ENCODE measurements at regions of chr1 and their contacts with region 1.

Region 1: DNA sequence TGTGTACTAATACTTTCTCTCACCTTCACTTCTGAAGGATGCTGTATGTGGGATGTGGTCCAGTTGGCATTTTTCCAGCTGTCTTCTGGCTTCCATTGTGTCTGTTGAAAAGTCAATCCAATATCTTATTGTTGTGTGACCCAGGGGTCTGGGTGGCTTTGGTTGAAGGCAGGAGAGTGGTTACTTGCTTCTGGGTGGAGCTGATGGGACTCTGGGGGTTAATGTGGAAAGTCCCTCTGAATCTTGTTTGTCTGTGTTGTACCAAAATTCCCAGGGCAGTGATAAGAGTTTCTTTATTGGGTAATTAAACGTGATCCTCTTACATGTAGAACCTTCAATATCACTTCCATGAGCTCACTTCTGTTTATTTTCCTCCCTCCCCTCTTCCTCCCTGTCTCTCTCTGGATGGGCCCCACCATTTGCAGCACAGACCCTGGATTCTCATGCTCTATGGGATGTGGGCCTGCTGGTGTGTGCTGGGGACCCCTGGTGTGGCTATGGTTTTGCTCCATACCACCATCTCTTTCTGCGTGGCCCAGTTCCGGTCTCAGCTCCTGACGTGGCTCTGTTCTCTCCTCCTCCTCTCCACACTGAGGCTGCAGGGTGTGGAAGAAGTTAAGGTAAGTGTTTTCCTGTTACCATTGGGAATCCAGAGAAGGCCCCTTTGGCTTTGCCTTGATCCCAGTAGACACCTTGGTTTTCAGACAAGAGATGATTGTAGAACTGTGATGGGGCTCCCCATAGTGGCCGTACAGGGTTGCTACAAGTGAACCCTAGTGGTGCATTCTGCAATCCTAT is 71.5 kb downstream of the HHAT start:
- DNase-seq: peak; percentile 77
- H3K4me3 Mint-ChIP-seq: no peak overlapping the region
- H3K27ac Mint-ChIP-seq: no peak overlapping the region
- H3K4me1 Mint-ChIP-seq: peaks cover 8% of the 10 kb centered on the region
- H3K27me3 Mint-ChIP-seq: no peaks in the 10 kb centered on the region
- CTCF ChIP-seq: peak; percentile 82

Region 2: GRCh38 chr1:210143465-210144062 is 256.7 kb before region 1 on chr1:
- CTCF ChIA-PET with region 1: no interaction called
- intact Hi-C with region 1: loop called (anchors 1 kb)
- DNase-seq: peak; percentile 84
- H3K4me3 Mint-ChIP-seq: no peak overlapping the region
- H3K27ac Mint-ChIP-seq: no peak overlapping the region
- H3K4me1 Mint-ChIP-seq: no peaks in the 10 kb centered on the region
- H3K27me3 Mint-ChIP-seq: no peaks in the 10 kb centered on the region
- CTCF ChIP-seq: no peak

Region 3: GRCh38 chr1:210373885-210374599 is 26.2 kb before region 1 on chr1:
- CTCF ChIA-PET with region 1: interaction called, 17 read pairs
- intact Hi-C with region 1: loop called (anchors 1 kb)
- DNase-seq: peak; percentile 93
- H3K4me3 Mint-ChIP-seq: peak overlapping the region; percentile 65
- H3K27ac Mint-ChIP-seq: peak overlapping the region; percentile 96
- H3K4me1 Mint-ChIP-seq: peaks cover 21% of the 10 kb centered on the region
- H3K27me3 Mint-ChIP-seq: no peaks in the 10 kb centered on the region
- CTCF ChIP-seq: peak; percentile 83

Region 4: GRCh38 chr1:210415846-210416448 is 15.7 kb after region 1 on chr1:
- CTCF ChIA-PET with region 1: no interaction called
- intact Hi-C with region 1: no loop called
- DNase-seq: no peak
- H3K4me3 Mint-ChIP-seq: no peak overlapping the region
- H3K27ac Mint-ChIP-seq: no peak overlapping the region
- H3K4me1 Mint-ChIP-seq: peaks cover 8% of the 10 kb centered on the region
- H3K27me3 Mint-ChIP-seq: no peaks in the 10 kb centered on the region
- CTCF ChIP-seq: no peak

Region 5: GRCh38 chr1:211118407-211119102 is 718.3 kb after region 1 on chr1:
- CTCF ChIA-PET with region 1: no interaction called
- intact Hi-C with region 1: no loop called
- DNase-seq: no peak
- H3K4me3 Mint-ChIP-seq: no peak overlapping the region
- H3K27ac Mint-ChIP-seq: no peak overlapping the region
- H3K4me1 Mint-ChIP-seq: peaks cover 6% of the 10 kb centered on the region
- H3K27me3 Mint-ChIP-seq: peaks cover 45% of the 10 kb centered on the region
- CTCF ChIP-seq: no peak